Transverse colon (tissue), 4 donors: ENCODE measurements at regions of chr2 and their contacts with region 1.

Region 1: DNA sequence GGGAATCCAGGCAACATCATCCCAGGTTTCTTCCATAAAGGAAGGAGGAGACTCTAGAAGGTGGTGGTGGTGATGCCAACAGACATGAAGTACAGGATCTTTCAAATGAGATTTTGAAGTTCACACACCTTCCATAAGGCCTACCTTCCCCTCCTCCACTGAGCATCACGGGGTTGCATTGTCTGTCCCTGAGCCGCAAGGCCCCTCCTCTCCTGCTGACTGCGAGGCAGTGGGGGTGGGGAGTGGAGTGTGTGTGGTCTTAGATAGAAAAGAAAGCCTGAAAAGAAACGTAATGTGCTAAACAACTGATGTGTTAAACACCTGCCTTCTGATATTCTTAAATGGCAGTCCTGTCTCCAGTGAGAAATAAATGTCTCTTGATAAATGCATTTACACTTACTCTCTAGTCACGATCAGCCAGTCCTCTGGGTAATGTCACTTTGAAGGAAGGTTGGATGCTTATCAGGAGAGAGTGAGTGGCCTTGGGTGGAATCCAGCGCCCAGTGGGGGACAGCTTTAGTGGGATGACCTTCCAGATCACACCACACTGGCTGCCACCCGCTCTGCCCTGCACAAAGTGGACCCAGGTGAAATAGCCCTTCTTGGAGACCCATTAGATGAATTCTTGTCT is 5.5 kb upstream of the SCYGR5 start:
- DNase-seq: no peak
- H3K4me3 ChIP-seq: no peak overlapping the region
- H3K27ac ChIP-seq: no peak overlapping the region
- H3K4me1 ChIP-seq: peaks cover 0 to 14% (median 3%) of the 10 kb centered on the region in 4 donors
- H3K27me3 ChIP-seq: no peaks in the 10 kb centered on the region
- CTCF ChIP-seq: no peak
- EP300 ChIP-seq: no peak
- POLR2A ChIP-seq: no peak

Region 2: GRCh38 chr2:227576110-227576509 is 85.0 kb before region 1 on chr2:
- in situ Hi-C with region 1: no loop called
- intact Hi-C with region 1: no loop called
- DNase-seq: no peak
- H3K4me3 ChIP-seq: no peak overlapping the region
- H3K27ac ChIP-seq: no peak overlapping the region
- H3K4me1 ChIP-seq: peaks cover 0 to 15% (median 2%) of the 10 kb centered on the region in 4 donors
- H3K27me3 ChIP-seq: no peaks in the 10 kb centered on the region
- CTCF ChIP-seq: no peak
- EP300 ChIP-seq: no peak
- POLR2A ChIP-seq: no peak

Region 3: DNA sequence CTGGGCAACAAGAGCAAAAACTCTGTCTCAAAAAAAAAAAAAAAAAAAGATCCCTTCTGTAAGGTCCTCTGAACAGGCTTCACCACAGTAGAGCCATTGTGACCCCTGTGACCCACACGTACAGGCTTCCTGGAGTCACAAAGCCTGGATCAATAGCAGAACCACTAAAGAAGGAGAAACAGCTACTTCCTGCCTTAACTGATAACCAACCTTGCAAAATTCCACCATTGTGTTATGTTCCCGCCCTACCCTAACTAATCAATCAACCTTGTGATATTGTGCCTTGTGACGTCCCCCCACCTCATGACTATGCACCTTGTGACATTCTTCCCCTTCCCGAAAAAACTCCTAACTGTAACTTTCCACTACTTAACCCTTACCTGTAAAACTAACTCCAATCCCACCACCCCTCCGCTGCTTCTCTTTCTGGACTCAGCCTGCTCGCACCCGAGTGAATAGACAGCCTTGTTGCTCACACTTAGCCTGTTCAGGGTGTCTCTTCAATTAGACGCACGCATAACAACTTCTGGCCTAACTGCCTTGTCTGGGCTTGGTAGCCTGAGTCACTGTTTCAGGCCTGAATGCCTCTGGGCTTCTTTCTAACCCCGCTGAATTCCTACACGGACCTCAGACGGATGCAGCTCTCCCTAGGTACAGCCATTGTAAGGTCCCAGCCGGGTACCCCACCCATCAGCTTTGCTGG is 98.4 kb after region 1 on chr2:
- in situ Hi-C with region 1: loop called (anchors 5 to 25 kb)
- intact Hi-C with region 1: no loop called
- DNase-seq: no peak
- H3K4me3 ChIP-seq: no peak overlapping the region
- H3K27ac ChIP-seq: no peak overlapping the region
- H3K4me1 ChIP-seq: peaks cover 8 to 23% (median 16%) of the 10 kb centered on the region in 4 donors
- H3K27me3 ChIP-seq: no peaks in the 10 kb centered on the region
- CTCF ChIP-seq: no peak
- EP300 ChIP-seq: no peak
- POLR2A ChIP-seq: no peak

Region 4: GRCh38 chr2:227862227-227862740 is 201.2 kb after region 1 on chr2:
- in situ Hi-C with region 1: loop called in 3 of 4 experiments (anchors 10 to 25 kb)
- intact Hi-C with region 1: no loop called
- DNase-seq: peak; percentile 36
- H3K4me3 ChIP-seq: no peak overlapping the region
- H3K27ac ChIP-seq: no peak overlapping the region
- H3K4me1 ChIP-seq: no peaks in the 10 kb centered on the region
- H3K27me3 ChIP-seq: no peaks in the 10 kb centered on the region
- CTCF ChIP-seq: peak; percentile 64 to 83 (median 67)
- EP300 ChIP-seq: no peak
- POLR2A ChIP-seq: no peak

Region 5: DNA sequence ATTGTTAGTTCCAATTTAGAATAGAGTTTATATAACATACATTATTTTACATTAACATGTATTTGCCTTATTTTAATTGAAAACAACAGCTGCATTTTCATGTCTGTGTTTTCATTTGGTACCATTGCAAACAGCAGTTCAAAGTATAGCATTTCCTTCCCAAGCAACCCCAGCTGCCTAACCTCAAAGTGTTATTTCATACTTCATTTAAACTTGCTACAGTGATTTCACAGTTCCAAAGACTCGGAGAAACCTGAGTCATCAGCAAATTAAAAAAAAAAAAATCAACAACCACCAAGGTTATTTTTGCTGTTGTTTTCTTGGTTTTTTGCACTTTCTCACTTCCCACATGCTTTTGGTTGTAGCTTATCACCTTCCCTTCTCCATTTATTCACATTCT is 756.8 kb after region 1 on chr2:
- in situ Hi-C with region 1: no loop called
- intact Hi-C with region 1: no loop called
- DNase-seq: no peak
- H3K4me3 ChIP-seq: no peak overlapping the region
- H3K27ac ChIP-seq: no peak overlapping the region
- H3K4me1 ChIP-seq: no peaks in the 10 kb centered on the region
- H3K27me3 ChIP-seq: no peaks in the 10 kb centered on the region
- CTCF ChIP-seq: no peak
- EP300 ChIP-seq: no peak
- POLR2A ChIP-seq: no peak